Activated T-helper 1 cell treated with anti-CD3 and anti-CD28 coated beads, Interleukin-12 subunit alpha, Interleukin-12 subunit beta, Interleukin-2, Interleukin-4 antibody, amounts not matched to agents 30 ng/mL and 10 ng/mL and 1 ng/mL, durations not matched to agents 14 hours and 24 hours and 36 hours (primary cell): ENCODE measurements at regions of chr10 and their contacts with region 1.

Region 1: DNA sequence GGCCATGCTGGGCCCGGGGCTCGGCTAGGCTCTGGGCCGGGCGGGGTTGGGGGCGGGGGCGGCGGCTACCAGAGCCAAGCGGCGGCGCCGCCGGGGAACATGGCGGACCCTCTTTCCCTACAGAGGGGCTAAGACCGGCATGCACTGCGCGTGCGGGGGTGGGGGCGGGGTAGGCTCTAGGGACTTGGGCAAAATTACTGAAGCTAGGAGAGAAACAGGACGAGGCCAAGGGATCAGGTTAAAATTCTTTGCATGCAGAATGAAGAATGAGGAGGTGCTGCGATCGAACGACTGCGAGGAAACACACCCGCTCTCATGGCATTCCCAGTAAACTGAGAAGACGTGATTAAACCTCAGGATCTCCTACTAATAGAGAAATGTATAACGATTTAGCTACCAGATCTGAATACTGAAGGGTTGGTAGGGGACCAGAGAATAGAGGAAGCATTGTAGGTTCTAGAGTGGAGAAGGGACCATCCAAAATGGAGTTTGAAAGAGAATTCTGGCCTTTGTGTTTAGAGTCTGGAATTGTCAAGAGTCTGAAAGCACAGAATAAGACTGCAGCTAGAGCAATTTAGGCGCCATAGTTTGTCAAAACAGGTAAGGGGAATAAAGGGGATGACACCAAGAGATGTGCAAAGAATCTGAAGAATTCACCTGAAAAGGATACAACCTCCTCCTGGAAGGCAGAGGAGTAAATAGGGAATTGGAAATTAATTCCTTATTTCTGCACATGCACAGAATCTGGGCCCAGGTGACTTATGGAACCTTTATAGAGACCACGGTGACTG is at the start of gene PPP3CB:
- DNase-seq: peak; percentile 77
- H3K4me3 Mint-ChIP-seq: peak within 1 kb of the TSS; percentile 100
- H3K27ac Mint-ChIP-seq: peak within 1 kb of the TSS; percentile 98
- H3K4me1 Mint-ChIP-seq: peaks cover 43% of the 10 kb centered on the region
- H3K27me3 Mint-ChIP-seq: no peaks in the 10 kb centered on the region
- total RNA-seq, gene PPP3CB: 43.6 and 43.9 TPM in 2 replicates

Region 2: DNA sequence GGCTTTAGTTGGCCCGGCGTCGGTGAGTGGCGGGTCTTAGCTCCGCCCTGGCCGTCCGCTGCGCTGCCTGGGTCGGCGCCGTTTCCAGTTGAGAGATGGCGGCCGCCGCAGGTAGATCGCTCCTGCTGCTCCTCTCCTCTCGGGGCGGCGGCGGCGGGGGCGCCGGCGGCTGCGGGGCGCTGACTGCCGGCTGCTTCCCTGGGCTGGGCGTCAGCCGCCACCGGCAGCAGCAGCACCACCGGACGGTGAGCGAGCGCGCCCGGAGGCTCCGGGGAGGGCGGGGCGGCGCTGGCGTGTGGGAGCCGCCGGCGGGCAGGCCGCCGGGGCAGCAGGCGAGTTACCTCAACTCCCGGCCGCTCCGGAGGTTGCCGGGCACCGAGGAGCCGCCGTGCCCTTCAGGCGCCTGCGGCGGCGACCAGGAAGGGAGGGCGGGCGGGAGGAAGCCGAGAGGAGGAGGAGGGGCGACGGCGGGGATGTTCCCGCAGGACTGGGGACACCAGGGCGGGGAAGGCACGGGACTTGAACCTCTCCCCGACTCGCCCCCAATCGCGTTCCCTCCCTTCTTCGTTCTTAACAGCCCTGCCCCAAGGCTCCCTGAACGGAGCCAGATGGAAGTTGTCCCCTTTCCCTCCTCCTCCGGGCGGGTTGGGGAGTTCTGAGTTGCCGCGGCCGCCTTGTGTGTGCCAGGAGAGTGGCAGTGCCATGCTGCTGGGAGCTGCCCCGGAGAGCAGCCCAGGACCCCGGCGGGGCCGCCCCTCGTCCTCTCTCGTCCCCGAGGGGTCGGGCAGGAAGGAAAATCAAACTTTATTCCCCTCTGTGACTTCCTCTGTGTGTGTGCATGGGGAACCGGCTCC is 803.8 kb before region 1 on chr10 and contains the start of gene MCU:
- intact Hi-C with region 1: loop called (anchors 10 kb)
- DNase-seq: peak; percentile 90
- H3K4me3 Mint-ChIP-seq: peak within 1 kb of the TSS; percentile 85
- H3K27ac Mint-ChIP-seq: peak within 1 kb of the TSS; percentile 66
- H3K4me1 Mint-ChIP-seq: peaks cover 37% of the 10 kb centered on the region
- H3K27me3 Mint-ChIP-seq: peaks cover 7% of the 10 kb centered on the region
- total RNA-seq, gene MCU: 12.6 and 17.5 TPM in 2 replicates

Region 3: DNA sequence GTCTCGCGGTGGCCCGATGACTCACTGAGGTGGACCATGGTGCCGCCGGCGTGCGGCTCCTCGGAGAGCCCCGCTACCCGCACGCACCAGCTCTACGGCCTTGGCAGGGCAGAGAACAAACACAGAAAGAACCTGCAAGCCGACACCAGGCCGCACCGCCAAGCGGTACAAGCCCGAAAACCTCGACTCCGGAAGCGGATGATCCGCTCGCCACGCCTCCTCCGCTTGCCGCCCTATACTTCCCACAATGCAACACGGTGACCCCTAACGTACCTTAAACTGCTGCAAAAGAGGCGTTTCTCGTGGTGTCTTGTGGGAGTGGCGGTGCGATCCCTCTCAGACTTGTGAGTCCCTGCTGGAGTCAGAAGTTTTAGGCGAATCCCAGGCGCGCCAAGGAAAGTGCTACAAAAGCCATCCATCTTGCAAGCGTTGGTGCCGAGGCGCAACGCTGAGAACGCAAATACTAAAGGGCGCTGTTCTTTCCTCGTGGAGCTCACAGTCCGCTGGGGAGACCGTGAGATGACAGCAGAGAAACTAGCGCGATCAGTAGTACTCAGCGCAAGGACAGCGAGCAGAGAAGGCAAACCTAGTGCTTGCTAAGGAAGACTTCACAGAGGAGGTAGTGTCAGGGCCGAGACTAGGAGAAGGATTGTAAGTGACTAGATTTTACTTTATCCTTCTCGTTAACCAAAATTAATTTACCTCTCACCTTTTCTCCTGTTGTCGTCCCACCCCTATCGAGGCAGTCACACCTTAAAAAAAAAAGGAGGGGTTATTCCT is 243.4 kb before region 1 on chr10 and contains the start of gene MRPS16:
- intact Hi-C with region 1: loop called (anchors 1 kb)
- DNase-seq: peak; percentile 92
- H3K4me3 Mint-ChIP-seq: peak within 1 kb of the TSS; percentile 97
- H3K27ac Mint-ChIP-seq: peak within 1 kb of the TSS; percentile 95
- H3K4me1 Mint-ChIP-seq: peaks cover 40% of the 10 kb centered on the region
- H3K27me3 Mint-ChIP-seq: no peaks in the 10 kb centered on the region
- total RNA-seq, gene MRPS16: 158 and 160 TPM in 2 replicates

Region 4: GRCh38 chr10:73480158-73480557 is 15.9 kb before region 1 on chr10:
- intact Hi-C with region 1: loop called (anchors 1 kb)
- DNase-seq: no peak
- H3K4me3 Mint-ChIP-seq: no peak overlapping the region
- H3K27ac Mint-ChIP-seq: no peak overlapping the region
- H3K4me1 Mint-ChIP-seq: peaks cover 27% of the 10 kb centered on the region
- H3K27me3 Mint-ChIP-seq: no peaks in the 10 kb centered on the region

Region 5: GRCh38 chr10:73743905-73744663 is 248.0 kb after region 1 on chr10 and contains the start of gene SEC24C:
- intact Hi-C with region 1: loop called (anchors 1 kb)
- DNase-seq: peak; percentile 93
- H3K4me3 Mint-ChIP-seq: peak within 1 kb of the TSS; percentile 97
- H3K27ac Mint-ChIP-seq: peak within 1 kb of the TSS; percentile 98
- H3K4me1 Mint-ChIP-seq: peaks cover 32% of the 10 kb centered on the region
- H3K27me3 Mint-ChIP-seq: no peaks in the 10 kb centered on the region
- total RNA-seq, gene SEC24C: 112 and 114 TPM in 2 replicates

Region 6: DNA sequence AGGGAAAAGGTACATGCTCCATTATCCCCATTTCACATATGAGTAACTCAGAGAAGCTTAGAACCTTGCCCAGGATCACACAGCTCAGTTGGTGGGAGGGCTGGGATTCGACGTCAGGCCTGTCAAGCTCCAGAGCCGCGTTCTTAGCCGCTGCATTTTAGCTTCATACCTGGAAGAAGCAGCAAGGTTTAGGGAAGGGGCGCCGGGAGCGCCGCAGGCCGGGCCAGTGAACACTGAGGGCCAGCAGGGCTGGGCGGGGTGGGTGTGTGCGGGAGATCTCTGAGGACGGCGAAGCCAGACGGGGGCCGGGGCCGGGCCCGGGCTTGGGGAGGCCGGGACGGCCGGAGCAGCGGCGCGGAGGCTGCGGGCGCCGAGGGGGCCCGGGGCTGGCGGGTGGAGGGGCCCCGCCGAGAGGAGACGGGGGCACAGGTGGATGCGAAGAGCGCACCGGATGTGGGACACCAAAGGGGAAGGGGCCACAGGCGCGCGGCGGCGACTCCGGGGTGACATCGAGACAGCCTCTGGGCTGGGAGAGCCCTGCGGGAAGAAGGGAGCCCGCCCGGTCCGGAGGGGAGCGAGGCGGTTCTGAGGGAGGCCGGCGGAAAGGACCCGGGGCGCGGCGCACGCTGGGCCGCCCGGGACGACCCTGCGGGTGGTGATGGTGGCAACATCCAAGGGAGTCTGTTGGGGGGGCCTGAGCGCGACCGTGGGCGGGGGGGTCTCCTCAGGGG is 314.8 kb after region 1 on chr10:
- intact Hi-C with region 1: loop called (anchors 1 kb)
- DNase-seq: peak; percentile 54
- H3K4me3 Mint-ChIP-seq: peak overlapping the region; percentile 97
- H3K27ac Mint-ChIP-seq: peak overlapping the region; percentile 98
- H3K4me1 Mint-ChIP-seq: peaks cover 50% of the 10 kb centered on the region
- H3K27me3 Mint-ChIP-seq: no peaks in the 10 kb centered on the region

Region 7: DNA sequence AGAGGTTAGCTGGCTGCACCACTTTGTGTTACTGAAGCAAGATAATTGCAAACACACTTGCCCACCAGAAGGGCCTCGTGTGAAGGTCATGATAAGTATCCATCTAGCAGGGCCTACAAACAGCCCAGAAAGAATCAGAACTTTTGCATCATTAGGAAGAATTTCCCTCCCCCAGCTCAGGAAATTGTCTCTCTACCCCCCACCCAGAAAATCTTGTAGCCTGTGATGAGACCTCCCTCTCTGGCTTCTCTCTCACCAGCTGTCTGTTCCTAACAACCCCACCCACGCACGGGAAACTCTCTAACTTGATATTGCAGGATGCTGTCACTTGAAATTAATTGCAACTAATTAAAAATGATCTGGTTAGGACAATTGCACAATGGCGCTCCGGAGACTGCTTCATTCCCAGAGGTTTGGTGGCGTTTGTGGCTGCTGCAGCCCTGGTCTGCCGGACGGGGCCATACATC is 1871.0 kb after region 1 on chr10:
- intact Hi-C with region 1: no loop called
- DNase-seq: no peak
- H3K4me3 Mint-ChIP-seq: no peak overlapping the region
- H3K27ac Mint-ChIP-seq: no peak overlapping the region
- H3K4me1 Mint-ChIP-seq: no peaks in the 10 kb centered on the region
- H3K27me3 Mint-ChIP-seq: peaks cover 3% of the 10 kb centered on the region